CD14-positive monocyte (primary cell): ENCODE measurements at regions of chr4 and their contacts with region 1.

Region 1: GRCh38 chr4:176036585-176037205 is 28.9 kb upstream of the WDR17 start:
- DNase-seq: no peak
- H3K4me3 ChIP-seq: no peak overlapping the region
- H3K4me3 Mint-ChIP-seq: no peak overlapping the region
- H3K27ac ChIP-seq: no peak overlapping the region
- H3K27ac Mint-ChIP-seq: no peak overlapping the region
- H3K4me1 ChIP-seq: no peaks in the 10 kb centered on the region
- H3K4me1 Mint-ChIP-seq: no peaks in the 10 kb centered on the region
- H3K27me3 ChIP-seq: no peaks in the 10 kb centered on the region
- H3K27me3 Mint-ChIP-seq: peaks cover 0 to 4% (median 0%) of the 10 kb centered on the region in 3 donors
- CTCF ChIP-seq: no peak

Region 2: DNA sequence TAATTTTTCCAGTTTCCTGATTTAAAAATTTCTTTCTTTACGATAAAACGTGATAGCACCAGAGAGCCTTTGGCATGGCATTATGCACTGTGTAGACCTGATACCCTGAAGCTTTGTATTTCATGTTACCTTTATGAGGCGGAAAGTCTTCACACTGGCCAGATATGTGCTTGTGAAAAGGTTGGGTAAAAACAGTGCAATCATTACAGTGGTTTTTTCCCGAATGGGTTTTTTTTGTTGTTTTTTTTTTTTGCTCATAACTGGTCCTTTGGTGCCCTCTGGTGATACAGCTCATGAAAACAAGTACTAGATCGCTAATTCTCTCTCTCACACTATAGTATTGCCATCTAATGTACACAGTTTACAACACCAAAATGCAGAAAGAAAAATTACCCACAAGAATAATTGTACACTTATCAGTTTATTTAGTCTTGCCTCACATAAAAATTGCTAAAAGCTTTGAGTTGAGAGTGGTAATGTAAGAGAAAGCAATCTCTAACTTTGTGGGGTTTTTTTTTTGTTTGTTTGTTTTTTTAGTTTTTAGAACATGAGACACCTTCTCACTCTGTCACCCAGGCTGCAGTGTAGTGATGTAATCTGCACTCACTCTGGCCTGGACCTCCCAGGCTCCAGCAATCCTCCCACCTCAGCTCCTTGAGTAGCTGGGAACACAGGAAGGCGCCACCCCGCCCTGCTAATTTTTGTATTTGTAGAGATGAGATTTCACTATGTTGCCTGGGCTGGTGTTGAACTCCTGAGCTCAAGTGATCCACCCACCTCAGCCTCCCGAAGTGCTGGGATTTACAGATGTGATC is 304.4 kb after region 1 on chr4:
- intact Hi-C with region 1: loop called (anchors 5 kb)
- DNase-seq: peak; percentile 13 to 32 (median 18)
- H3K4me3 ChIP-seq: no peak overlapping the region
- H3K4me3 Mint-ChIP-seq: no peak overlapping the region
- H3K27ac ChIP-seq: no peak overlapping the region
- H3K27ac Mint-ChIP-seq: no peak overlapping the region
- H3K4me1 ChIP-seq: no peaks in the 10 kb centered on the region
- H3K4me1 Mint-ChIP-seq: peaks cover 2% of the 10 kb centered on the region
- H3K27me3 ChIP-seq: no peaks in the 10 kb centered on the region
- H3K27me3 Mint-ChIP-seq: peaks cover 0 to 2% (median 1%) of the 10 kb centered on the region in 3 donors
- CTCF ChIP-seq: peak; percentile 74